Activated CD4-positive, alpha-beta T cell treated with anti-CD3 and anti-CD28 coated beads for 36 hours (primary cell): ENCODE measurements at regions of chr11 and their contacts with region 1.

Region 1: DNA sequence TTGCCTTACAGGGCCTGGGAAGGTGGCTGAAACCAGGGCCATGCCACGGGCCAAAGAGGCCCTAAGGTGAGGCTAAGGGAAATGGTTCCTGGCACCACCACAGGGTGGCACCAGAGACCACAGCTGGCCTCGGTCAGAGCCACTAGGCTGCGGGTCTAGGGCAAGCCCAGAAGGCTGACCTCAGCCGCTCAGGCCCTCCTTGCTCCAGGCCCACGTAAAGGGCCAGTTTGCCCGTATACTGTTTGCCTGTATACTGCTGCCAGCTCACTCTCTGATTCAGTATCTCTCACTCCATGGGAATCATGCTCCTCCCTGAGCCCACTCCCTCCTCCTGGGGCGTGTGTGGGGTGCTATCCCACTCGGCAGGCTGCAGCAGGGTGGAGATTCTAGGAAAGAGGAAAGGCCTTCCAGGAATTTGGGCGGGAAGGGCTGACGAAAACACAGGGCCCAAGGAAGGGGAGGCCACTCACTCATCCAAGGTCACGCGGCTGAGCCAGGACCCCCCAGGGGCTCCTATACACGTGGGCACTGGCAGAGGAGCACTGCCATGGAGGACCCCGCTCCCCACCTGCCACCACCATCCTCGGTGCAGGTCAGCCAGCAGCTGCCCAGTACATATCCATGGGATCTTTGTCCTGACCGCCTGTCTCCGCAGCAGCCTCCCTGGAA is 62.4 kb downstream of the NECTIN1 start:
- DNase-seq: peak; percentile 79
- ATAC-seq: peak; percentile 96
- H3K4me3 Mint-ChIP-seq: no peak overlapping the region
- H3K27ac Mint-ChIP-seq: no peak overlapping the region
- H3K4me1 Mint-ChIP-seq: no peaks in the 10 kb centered on the region
- H3K27me3 Mint-ChIP-seq: no peaks in the 10 kb centered on the region

Region 2: DNA sequence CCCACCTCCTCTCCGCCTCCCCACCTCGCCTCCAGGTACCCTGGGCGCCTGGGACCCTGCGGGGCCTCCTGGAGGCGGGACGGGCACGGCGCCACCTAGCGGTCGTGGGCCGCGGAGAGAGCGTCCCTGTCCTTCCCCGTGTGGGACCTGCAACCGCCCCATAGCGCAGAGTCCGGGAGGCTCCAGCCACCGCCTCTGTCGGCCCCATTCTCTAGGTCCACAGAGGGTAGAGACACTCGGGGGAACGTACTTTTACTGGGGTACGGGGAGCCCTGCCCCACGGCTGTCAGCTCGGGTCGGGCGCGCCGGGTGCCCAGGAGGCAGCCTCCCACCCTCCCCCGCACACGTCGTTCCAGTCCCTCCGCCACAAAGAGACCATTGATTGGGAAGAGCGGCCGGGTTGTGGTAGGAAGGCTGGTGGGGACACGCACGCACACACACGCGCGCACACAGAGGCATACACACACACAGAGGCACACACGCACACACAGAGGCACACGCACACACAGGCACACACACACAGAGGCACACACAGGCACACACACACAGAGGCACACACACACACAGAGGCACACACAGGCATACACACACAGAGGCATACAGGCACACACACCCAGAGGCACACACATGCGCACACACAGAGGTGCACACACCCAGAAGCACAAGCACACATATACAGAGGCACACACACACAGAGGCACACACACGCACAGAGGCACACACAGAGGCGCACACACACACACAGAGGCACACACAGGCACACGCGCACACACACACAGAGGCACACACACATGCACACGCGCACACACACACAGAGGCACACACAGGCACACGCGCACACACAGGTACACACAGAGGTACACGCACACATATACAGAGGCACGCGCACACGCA is 75.0 kb after region 1 on chr11:
- CTCF ChIA-PET with region 1: no interaction called
- POLR2A ChIA-PET with region 1: no interaction called
- intact Hi-C with region 1: loop called in 1 of 2 experiments (anchors 1 kb)
- DNase-seq: peak; percentile 79
- ATAC-seq: peak; percentile 83
- H3K4me3 Mint-ChIP-seq: no peak overlapping the region
- H3K27ac Mint-ChIP-seq: no peak overlapping the region
- H3K4me1 Mint-ChIP-seq: peaks cover 10% of the 10 kb centered on the region
- H3K27me3 Mint-ChIP-seq: peaks cover 39% of the 10 kb centered on the region

Region 3: DNA sequence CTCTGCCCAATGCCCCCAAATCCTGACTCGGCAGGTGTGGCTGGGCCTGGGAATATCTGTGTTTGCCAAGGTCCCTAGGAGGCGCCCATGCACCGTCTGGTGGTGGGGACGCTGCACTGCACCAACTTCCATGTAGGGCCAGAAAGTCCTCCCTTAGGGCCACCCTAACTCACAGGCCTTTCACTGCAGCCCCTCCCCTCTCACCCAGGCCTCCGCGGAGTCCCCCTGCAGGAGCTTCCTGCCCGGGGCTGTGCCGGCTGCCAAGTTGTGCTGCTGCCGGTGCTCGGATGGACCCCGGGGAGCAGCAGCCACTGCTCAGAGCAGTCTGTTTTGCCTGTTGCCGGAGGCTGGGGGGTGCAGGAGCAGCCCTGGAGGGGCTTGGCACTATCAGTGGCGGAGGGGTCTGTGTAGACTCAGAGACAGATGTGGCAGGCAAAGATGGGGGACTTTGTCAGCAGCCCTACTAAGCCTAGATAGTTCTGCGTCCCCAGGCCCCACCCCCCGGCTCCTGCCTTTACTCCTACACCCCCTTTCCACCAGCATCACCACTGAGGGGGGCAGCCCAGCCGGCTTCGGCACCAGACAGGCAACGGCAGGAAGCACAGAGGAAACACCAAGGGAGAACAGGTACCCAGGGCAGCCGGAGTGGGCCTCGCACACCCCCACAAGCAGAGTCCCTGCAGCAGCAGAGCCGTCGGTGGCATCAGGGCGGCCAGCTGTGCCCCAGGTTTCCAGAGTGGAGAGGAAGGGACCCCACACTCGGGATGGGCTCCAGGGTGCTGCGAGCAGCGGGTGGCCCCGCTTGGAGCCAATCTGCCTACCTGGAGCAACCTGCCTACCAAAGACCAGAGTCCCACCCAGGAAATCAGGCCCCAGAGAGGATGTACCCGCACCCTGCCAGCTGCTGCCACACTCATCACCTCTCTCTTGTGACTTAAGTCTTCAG is 347.0 kb after region 1 on chr11:
- CTCF ChIA-PET with region 1: no interaction called
- POLR2A ChIA-PET with region 1: no interaction called
- intact Hi-C with region 1: loop called in 1 of 2 experiments (anchors 5 kb)
- DNase-seq: peak; percentile 43
- ATAC-seq: no peak
- H3K4me3 Mint-ChIP-seq: no peak overlapping the region
- H3K27ac Mint-ChIP-seq: no peak overlapping the region
- H3K4me1 Mint-ChIP-seq: no peaks in the 10 kb centered on the region
- H3K27me3 Mint-ChIP-seq: peaks cover 46% of the 10 kb centered on the region

Region 4: DNA sequence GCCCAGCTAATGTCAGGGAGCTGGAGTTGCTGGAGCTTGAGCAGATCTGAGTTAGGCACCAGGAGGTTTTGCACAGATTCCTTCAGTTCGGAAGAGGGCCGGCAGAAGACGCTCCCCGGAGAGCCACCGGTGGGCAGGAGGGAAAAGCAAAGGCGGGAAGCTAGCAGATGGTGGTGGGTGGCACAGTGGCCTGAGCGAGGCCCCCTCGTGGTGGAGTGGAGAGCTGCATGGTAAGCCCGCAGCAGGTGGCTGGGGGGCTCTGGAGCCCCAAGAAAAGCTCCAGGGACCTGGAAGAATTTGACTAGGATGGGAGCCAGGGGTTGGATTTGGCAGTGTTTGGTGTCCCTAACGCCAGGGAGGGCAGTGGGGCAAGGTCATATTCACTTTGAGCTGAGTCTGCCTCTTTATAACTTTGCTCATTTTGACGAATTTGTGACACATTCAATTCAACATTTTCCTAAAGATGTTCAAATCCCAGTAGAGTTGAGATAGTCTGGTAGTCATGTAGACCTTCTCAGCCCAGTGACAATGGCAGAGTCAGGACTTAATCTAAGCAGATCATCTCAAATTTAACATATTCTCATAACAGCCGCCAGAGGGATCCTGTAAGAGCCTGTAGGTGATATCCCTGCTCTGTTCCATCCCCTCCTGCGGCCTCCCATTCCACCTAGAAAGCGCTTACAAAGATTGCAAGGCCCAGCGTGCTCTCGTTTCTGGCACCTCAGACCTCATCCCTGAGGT is 413.3 kb after region 1 on chr11:
- CTCF ChIA-PET with region 1: no interaction called
- POLR2A ChIA-PET with region 1: no interaction called
- intact Hi-C with region 1: loop called in 1 of 2 experiments (anchors 1 kb)
- DNase-seq: peak; percentile 49
- ATAC-seq: no peak
- H3K4me3 Mint-ChIP-seq: no peak overlapping the region
- H3K27ac Mint-ChIP-seq: no peak overlapping the region
- H3K4me1 Mint-ChIP-seq: no peaks in the 10 kb centered on the region
- H3K27me3 Mint-ChIP-seq: peaks cover 28% of the 10 kb centered on the region

Region 5: DNA sequence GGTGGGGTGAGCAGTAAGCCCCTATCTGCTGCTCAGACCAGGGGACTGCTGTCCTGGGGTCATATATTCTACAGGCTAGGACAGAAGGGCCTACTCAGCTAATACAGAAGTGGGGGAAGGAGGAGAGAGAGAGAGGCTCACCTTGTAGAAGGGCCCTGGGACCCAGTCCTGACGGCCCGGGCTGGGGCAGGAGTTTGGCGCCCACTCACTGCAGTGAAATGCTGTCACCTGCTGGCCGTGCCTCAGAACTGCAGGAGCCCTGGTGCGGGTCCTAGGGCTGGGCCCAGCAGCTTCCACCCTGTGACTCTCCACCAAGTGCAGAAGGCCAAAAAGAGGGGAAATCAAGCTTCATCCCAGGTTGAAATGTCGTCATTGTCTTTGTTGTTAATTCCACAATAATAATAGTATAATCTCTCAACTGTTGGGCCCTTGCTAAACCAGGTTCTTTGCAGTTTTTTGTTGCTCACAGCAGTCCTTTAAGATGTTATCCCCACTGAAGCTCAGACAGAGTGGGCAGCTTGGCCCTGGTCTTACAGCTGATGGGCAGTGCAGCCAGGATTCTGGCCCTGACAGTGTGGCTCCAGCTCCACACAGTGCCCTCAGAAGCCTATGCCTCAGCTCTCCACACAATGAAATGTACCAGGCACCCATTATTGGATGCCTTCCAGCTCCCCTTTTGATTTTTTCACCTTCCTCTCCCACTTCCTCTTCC is 441.7 kb after region 1 on chr11:
- CTCF ChIA-PET with region 1: interaction called, 5 read pairs
- POLR2A ChIA-PET with region 1: no interaction called
- intact Hi-C with region 1: loop called (anchors 1 kb)
- DNase-seq: peak; percentile 80
- ATAC-seq: peak; percentile 86
- H3K4me3 Mint-ChIP-seq: no peak overlapping the region
- H3K27ac Mint-ChIP-seq: no peak overlapping the region
- H3K4me1 Mint-ChIP-seq: no peaks in the 10 kb centered on the region
- H3K27me3 Mint-ChIP-seq: peaks cover 4% of the 10 kb centered on the region

Region 6: GRCh38 chr11:120172054-120172911 is 505.7 kb after region 1 on chr11:
- CTCF ChIA-PET with region 1: interaction called, 3 read pairs
- POLR2A ChIA-PET with region 1: no interaction called
- intact Hi-C with region 1: loop called in 1 of 2 experiments (anchors 5 kb)
- DNase-seq: peak; percentile 76
- ATAC-seq: peak; percentile 60
- H3K4me3 Mint-ChIP-seq: no peak overlapping the region
- H3K27ac Mint-ChIP-seq: no peak overlapping the region
- H3K4me1 Mint-ChIP-seq: peaks cover 4% of the 10 kb centered on the region
- H3K27me3 Mint-ChIP-seq: peaks cover 61% of the 10 kb centered on the region